SK-N-SH (cell line): ENCODE measurements at regions of chr2 and their contacts with region 1.

Region 1: GRCh38 chr2:85826990-85827878 is 61.6 kb downstream of the ST3GAL5 start:
- DNase-seq: peak; percentile 84
- H3K4me3 ChIP-seq: peak overlapping the region; percentile 15 to 49; a peak in 2 of 4 replicates
- H3K27ac ChIP-seq: no peak overlapping the region
- H3K4me1 ChIP-seq: peaks cover 0 to 7% of the 10 kb centered on the region in 2 experiments; a peak in 1 of 4 replicates
- H3K27me3 ChIP-seq: no peaks in the 10 kb centered on the region
- CTCF ChIP-seq: peak; percentile 87
- EP300 ChIP-seq: no peak
- RAD21 ChIP-seq: peak; percentile 92

Region 2: GRCh38 chr2:85712849-85713602 is 114.2 kb before region 1 on chr2:
- CTCF ChIA-PET with region 1: interaction called, 11 read pairs
- POLR2A ChIA-PET with region 1: no interaction called
- DNase-seq: no peak
- H3K4me3 ChIP-seq: no peak overlapping the region
- H3K27ac ChIP-seq: no peak overlapping the region
- H3K4me1 ChIP-seq: peaks cover 9 to 16% of the 10 kb centered on the region in 2 experiments; a peak in 3 of 4 replicates
- H3K27me3 ChIP-seq: no peaks in the 10 kb centered on the region
- CTCF ChIP-seq: no peak
- EP300 ChIP-seq: no peak
- RAD21 ChIP-seq: no peak

Region 3: GRCh38 chr2:85741833-85742455 is 85.3 kb before region 1 on chr2:
- CTCF ChIA-PET with region 1: interaction called, 15 read pairs
- POLR2A ChIA-PET with region 1: no interaction called
- DNase-seq: peak; percentile 77
- H3K4me3 ChIP-seq: no peak overlapping the region
- H3K27ac ChIP-seq: peak overlapping the region; percentile 95 to 96
- H3K4me1 ChIP-seq: peaks cover 53 to 54% of the 10 kb centered on the region in 2 experiments
- H3K27me3 ChIP-seq: no peaks in the 10 kb centered on the region
- CTCF ChIP-seq: no peak
- EP300 ChIP-seq: peak in 1 of 2 experiments; percentile 81; a peak in 1 of 4 replicates
- RAD21 ChIP-seq: no peak

Region 4: DNA sequence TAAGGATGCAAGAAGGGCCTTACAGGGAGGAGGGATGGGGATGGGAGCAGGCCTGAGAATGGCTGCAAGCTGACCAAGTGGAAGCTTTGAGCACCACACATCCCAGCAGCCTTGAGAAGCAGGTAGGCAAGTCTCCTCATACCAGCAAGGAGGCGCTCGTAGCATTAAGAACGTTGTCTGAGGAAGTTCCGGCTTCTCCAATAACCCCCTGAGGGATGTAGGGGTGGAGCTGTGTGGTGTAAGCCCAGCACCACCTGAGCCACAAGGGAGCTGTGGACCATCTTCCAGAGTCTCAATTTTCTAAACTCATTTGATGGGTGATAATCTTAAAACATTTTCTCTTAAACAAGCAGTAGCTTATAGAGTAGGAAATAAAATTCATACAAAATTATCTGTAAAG is 10.9 kb after region 1 on chr2:
- CTCF ChIA-PET with region 1: interaction called, 29 read pairs
- POLR2A ChIA-PET with region 1: no interaction called
- DNase-seq: no peak
- H3K4me3 ChIP-seq: no peak overlapping the region
- H3K27ac ChIP-seq: no peak overlapping the region
- H3K4me1 ChIP-seq: no peaks in the 10 kb centered on the region
- H3K27me3 ChIP-seq: no peaks in the 10 kb centered on the region
- CTCF ChIP-seq: no peak
- EP300 ChIP-seq: no peak
- RAD21 ChIP-seq: no peak

Region 5: GRCh38 chr2:85865539-85866164 is 38.4 kb after region 1 on chr2:
- CTCF ChIA-PET with region 1: interaction called, 12 read pairs
- POLR2A ChIA-PET with region 1: no interaction called
- DNase-seq: no peak
- H3K4me3 ChIP-seq: no peak overlapping the region
- H3K27ac ChIP-seq: no peak overlapping the region
- H3K4me1 ChIP-seq: 0 out of 4 replicates have a peak, but pooled peaks cover 0 to 3% of the 10 kb centered on the region in 2 experiments
- H3K27me3 ChIP-seq: no peaks in the 10 kb centered on the region
- CTCF ChIP-seq: no peak
- EP300 ChIP-seq: no peak
- RAD21 ChIP-seq: no peak

Region 6: DNA sequence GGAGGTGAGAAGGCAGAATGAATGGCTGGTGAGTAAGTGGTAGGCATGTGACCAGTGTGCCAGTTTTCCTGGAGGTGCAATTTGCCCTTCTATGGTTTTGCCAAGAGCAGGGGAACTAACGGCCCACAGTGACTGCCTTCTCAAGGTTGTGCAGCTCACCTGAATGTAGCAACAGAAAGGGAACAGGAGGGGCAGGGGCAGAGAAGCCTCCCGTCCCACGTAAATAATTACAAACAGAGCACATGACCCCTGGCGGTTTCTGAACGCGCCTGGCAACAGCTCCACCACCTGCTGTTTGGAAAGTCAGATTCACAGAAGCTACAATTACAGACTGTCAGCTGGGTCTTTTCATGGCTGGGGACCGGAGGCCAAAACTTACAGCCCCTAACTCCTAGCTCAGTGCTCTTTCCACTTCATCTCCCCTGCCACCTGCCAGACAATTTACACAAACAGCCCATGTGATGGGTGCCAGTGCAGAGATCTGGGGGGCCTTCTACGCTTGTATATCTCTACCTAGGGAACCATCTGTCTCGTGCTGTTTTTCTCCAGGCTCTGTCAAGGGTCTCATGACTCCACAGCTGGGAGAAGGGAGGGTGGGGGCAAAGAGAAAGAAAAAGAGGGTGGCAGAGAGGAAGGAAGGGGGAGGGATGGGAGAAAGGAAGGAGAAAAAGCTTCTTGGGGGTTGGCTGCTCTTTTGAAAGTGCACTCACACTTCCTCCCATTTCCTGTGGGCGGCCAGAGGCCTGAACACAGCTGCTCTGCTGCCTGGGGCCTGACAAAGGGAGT is 208.8 kb after region 1 on chr2:
- CTCF ChIA-PET with region 1: interaction called, 19 read pairs
- POLR2A ChIA-PET with region 1: no interaction called
- DNase-seq: peak; percentile 63
- H3K4me3 ChIP-seq: no peak overlapping the region
- H3K27ac ChIP-seq: peak overlapping the region; percentile 10 to 44; a peak in 3 of 4 replicates
- H3K4me1 ChIP-seq: peaks cover 11 to 36% of the 10 kb centered on the region in 2 experiments
- H3K27me3 ChIP-seq: no peaks in the 10 kb centered on the region
- CTCF ChIP-seq: no peak
- EP300 ChIP-seq: no peak
- RAD21 ChIP-seq: no peak

Region 7: GRCh38 chr2:86079981-86080911 is 253.0 kb after region 1 on chr2:
- CTCF ChIA-PET with region 1: interaction called, 223 read pairs
- POLR2A ChIA-PET with region 1: interaction called, 3 read pairs
- DNase-seq: peak; percentile 69
- H3K4me3 ChIP-seq: peak overlapping the region in 1 of 2 experiments; percentile 17; a peak in 1 of 4 replicates
- H3K27ac ChIP-seq: no peak overlapping the region
- H3K4me1 ChIP-seq: no peaks in the 10 kb centered on the region
- H3K27me3 ChIP-seq: no peaks in the 10 kb centered on the region
- CTCF ChIP-seq: peak; percentile 86
- EP300 ChIP-seq: no peak
- RAD21 ChIP-seq: peak; percentile 81

Region 8: DNA sequence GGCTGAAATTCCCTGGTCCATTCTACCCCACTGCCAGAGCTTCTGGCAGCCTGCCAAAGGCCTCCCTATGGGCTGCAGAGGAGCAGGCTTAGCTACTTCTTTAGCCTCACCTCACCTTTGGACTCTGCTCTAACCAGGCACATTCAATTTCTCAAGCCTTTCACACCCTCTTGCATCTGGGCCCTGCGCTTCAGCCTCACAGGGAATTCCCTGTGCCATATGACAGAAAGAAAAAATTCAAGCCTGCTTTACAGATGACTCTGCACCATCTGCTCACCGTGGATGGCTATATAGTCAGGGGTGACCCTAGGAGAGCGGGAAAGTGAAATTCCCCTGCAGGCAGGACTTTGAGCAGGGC is 447.7 kb after region 1 on chr2:
- CTCF ChIA-PET with region 1: no interaction called
- POLR2A ChIA-PET with region 1: no interaction called
- DNase-seq: peak; percentile 55
- H3K4me3 ChIP-seq: no peak overlapping the region
- H3K27ac ChIP-seq: 0 out of 4 replicates have a peak overlapping the region, but pooled peaks of 1 of the 2 experiments have one; percentile 36
- H3K4me1 ChIP-seq: peaks cover 7% of the 10 kb centered on the region in 2 experiments; a peak in 2 of 4 replicates
- H3K27me3 ChIP-seq: no peaks in the 10 kb centered on the region
- CTCF ChIP-seq: no peak
- EP300 ChIP-seq: no peak
- RAD21 ChIP-seq: no peak